SK-N-SH (cell line): ENCODE measurements at regions of chr9 and their contacts with region 1.

Region 1: DNA sequence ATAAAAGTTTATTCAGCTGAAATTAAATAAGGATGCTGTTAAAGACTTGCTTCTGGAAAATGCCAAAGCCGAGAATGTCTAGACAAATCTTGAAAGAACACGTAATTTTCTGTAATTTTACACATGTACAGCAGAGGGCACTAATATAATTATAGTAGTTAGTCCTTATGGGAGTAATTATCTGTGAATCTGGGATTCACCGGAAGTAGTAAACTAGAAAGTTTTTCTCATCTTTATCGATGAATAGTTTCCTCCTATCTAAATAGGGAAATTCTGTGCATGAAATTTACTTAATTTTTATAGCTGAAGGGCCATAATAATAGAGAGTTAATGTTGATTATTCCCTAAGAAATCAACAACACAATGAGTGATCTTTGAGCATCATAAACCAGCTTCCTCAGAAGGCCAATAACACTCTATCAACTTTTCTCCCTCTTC is 18.4 kb upstream of the CNTLN start:
- DNase-seq: peak; percentile 27
- H3K4me3 ChIP-seq: no peak overlapping the region; a peak in 1 of 4 replicates
- H3K27ac ChIP-seq: no peak overlapping the region
- H3K4me1 ChIP-seq: no peaks in the 10 kb centered on the region; a peak in 1 of 4 replicates
- H3K27me3 ChIP-seq: no peaks in the 10 kb centered on the region
- CTCF ChIP-seq: peak; percentile 59
- EP300 ChIP-seq: no peak
- RAD21 ChIP-seq: peak; percentile 43; the same call in 1 of the 2 replicates

Region 2: DNA sequence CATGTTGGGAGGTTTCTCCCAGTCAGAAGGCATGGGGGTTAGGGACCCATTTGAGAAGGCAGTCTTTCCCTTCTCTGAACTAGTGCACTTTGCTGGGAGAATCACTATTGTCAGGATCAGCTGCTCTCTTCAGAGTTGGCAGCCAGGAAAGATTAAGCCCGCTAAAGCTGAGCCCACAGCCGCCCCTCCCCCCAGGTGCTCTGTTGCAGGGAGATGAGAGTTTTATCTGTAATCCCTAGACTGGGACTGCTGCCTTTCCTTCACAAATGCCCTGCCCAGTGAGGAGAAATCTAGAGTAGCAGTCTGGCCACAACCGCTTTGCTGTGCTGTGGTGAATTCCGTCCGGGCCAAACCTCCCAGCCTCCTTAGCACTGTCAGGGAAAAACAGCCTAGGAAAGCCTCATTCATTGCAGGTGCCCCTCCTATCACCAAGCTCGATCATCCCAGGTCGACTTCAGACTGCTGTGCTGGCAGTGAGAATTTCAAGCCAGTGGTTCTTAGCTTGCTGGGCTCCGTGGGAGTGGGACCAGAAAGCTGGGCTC is 88.3 kb after region 1 on chr9:
- CTCF ChIA-PET with region 1: no interaction called
- POLR2A ChIA-PET with region 1: no interaction called
- DNase-seq: no peak
- H3K4me3 ChIP-seq: no peak overlapping the region
- H3K27ac ChIP-seq: no peak overlapping the region
- H3K4me1 ChIP-seq: peaks cover 0 to 10% of the 10 kb centered on the region in 2 experiments; a peak in 1 of 4 replicates
- H3K27me3 ChIP-seq: no peaks in the 10 kb centered on the region
- CTCF ChIP-seq: no peak
- EP300 ChIP-seq: no peak
- RAD21 ChIP-seq: no peak

Region 3: GRCh38 chr9:17280350-17281012 is 164.1 kb after region 1 on chr9:
- CTCF ChIA-PET with region 1: no interaction called
- POLR2A ChIA-PET with region 1: no interaction called
- DNase-seq: no peak
- H3K4me3 ChIP-seq: no peak overlapping the region
- H3K27ac ChIP-seq: no peak overlapping the region
- H3K4me1 ChIP-seq: no peaks in the 10 kb centered on the region
- H3K27me3 ChIP-seq: no peaks in the 10 kb centered on the region
- CTCF ChIP-seq: no peak
- EP300 ChIP-seq: no peak
- RAD21 ChIP-seq: no peak

Region 4: GRCh38 chr9:17462869-17463464 is 346.5 kb after region 1 on chr9:
- CTCF ChIA-PET with region 1: interaction called, 11 read pairs
- POLR2A ChIA-PET with region 1: no interaction called
- DNase-seq: peak; percentile 24
- H3K4me3 ChIP-seq: no peak overlapping the region; a peak in 1 of 4 replicates
- H3K27ac ChIP-seq: no peak overlapping the region
- H3K4me1 ChIP-seq: no peaks in the 10 kb centered on the region; a peak in 1 of 4 replicates
- H3K27me3 ChIP-seq: no peaks in the 10 kb centered on the region
- CTCF ChIP-seq: peak; percentile 88
- EP300 ChIP-seq: no peak
- RAD21 ChIP-seq: peak; percentile 93